ENCODE measurements at regions of chr15 and their contacts with region 1.

Region 1: GRCh38 chr15:41013698-41014414 is 60.6 kb downstream of the CHAC1 start:
- DNase-seq: no peak
- ATAC-seq: no peak
- H3K4me3 ChIP-seq: no peak overlapping the region
- H3K27ac ChIP-seq: peak overlapping the region in 1 of 12 donors; percentile 50
- H3K4me1 ChIP-seq: peaks cover 0 to 59% (median 20%) of the 10 kb centered on the region in 12 donors
- H3K27me3 ChIP-seq: no peaks in the 10 kb centered on the region
- CTCF ChIP-seq: no peak
- POLR2A ChIP-seq: no peak

Region 2: GRCh38 chr15:40847205-40847961 is 166.5 kb before region 1 on chr15:
- intact Hi-C with region 1: no loop called
- DNase-seq: peak in 4 of 5 donors; percentile 44 to 58 (median 48)
- ATAC-seq: peak; percentile 64 to 84 (median 80)
- H3K4me3 ChIP-seq: peak overlapping the region in 1 of 12 donors; percentile 4
- H3K27ac ChIP-seq: peak overlapping the region in 1 of 12 donors; percentile 73
- H3K4me1 ChIP-seq: peaks cover 0 to 37% (median 10%) of the 10 kb centered on the region in 12 donors
- H3K27me3 ChIP-seq: peaks cover 9 to 40% (median 19%) of the 10 kb centered on the region in 9 donors
- CTCF ChIP-seq: no peak
- POLR2A ChIP-seq: no peak

Region 3: GRCh38 chr15:40952901-40953712 is 60.7 kb before region 1 on chr15 and contains the start of gene CHAC1:
- intact Hi-C with region 1: loop called in 2 of 10 experiments (anchors 5 to 10 kb)
- DNase-seq: peak; percentile 93 to 96 (median 96)
- ATAC-seq: peak; percentile 72 to 92 (median 91)
- H3K4me3 ChIP-seq: peak within 1 kb of the TSS; percentile 59 to 83 (median 74)
- H3K27ac ChIP-seq: peak within 1 kb of the TSS in 11 of 12 donors; percentile 14 to 87 (median 71)
- H3K4me1 ChIP-seq: peaks cover 0 to 44% (median 22%) of the 10 kb centered on the region in 12 donors
- H3K27me3 ChIP-seq: no peaks in the 10 kb centered on the region
- CTCF ChIP-seq: peak in 3 of 12 donors; percentile 9 to 20 (median 10)
- POLR2A ChIP-seq: peak; percentile 26 to 60
- total RNA-seq, gene CHAC1: 0.72 to 5.3 (median 1.8) TPM